IMR-90 (cell line): ENCODE measurements at regions of chr4 and their contacts with region 1.

Region 1: GRCh38 chr4:90769251-90769650 is 642.1 kb downstream of the CCSER1 start:
- DNase-seq: no peak
- ATAC-seq: no peak
- H3K4me3 ChIP-seq: no peak overlapping the region
- H3K27ac ChIP-seq: no peak overlapping the region
- H3K4me1 ChIP-seq: no peaks in the 10 kb centered on the region
- H3K27me3 ChIP-seq: no peaks in the 10 kb centered on the region
- CTCF ChIP-seq: no peak
- POLR2A ChIP-seq: no peak
- RAD21 ChIP-seq: no peak

Region 2: DNA sequence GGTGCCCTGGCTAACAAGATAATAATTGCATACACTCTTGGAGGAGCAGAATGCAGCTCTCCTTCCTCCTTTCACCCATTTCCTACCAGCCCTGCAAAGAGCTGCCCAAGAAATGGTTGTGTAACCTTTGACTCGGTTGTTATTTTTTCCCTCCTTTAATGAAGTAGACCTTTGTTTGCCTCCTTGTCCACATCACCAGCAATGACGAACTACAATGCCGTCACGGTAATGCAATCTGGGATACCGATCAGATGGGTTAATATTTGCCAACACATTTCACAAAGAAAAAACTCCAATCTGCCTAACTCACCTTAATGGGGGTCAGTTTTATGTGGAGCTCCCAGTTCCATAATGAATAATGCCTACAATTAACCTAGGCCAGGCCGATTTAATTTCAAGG is 1493.7 kb before region 1 on chr4:
- CTCF ChIA-PET with region 1: no interaction called
- POLR2A ChIA-PET with region 1: no interaction called
- dilution Hi-C with region 1: no loop called
- in situ Hi-C with region 1: no loop called
- intact Hi-C with region 1: loop called (anchors 5 kb)
- DNase-seq: no peak
- ATAC-seq: no peak
- H3K4me3 ChIP-seq: no peak overlapping the region
- H3K27ac ChIP-seq: no peak overlapping the region
- H3K4me1 ChIP-seq: no peaks in the 10 kb centered on the region
- H3K27me3 ChIP-seq: peaks cover 3% of the 10 kb centered on the region; the same call in 1 of the 2 replicates
- CTCF ChIP-seq: no peak
- POLR2A ChIP-seq: no peak
- RAD21 ChIP-seq: no peak